Dorsolateral prefrontal cortex (tissue), 120 donors: ENCODE measurements at regions of chr19 and their contacts with region 1.

Region 1: DNA sequence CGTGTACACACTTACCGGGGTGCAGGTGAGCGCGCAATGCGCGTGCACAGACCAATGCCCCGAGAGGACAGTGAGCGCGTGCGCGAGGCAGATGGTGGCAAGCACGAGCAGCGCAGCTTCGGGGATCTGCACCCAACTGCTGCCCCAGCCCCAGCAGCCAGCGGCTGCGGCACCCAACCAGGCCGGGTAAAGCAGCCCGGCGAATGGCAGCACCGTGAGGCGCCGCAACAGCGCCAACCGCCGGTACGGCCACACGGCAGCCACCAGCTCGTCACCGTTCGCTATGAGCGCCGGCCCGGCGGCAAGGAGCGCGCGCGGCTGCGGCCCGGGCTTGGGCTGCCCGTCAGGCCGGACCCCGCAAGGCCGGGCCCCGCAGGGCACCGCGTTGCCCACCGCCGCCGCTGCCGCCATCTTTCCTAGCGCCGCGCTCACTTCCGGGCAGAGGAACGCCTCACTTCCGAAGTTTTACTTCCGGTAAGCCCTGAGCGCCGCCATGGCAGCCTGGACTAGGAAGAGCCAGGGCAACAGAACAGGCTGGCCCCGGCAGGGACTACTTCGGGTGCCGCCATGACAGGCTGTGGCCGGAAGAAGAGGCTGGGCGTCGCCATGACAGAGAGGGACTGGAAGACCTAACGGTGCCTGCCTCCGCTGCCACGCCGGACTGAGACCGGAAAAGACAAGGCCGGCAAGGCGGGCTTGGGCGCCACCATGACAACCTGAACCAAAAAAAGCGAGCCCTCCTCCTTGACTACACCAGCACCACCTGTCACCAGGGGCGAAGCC is at the start of gene ATP13A1:
- DNase-seq: peak; percentile 93 to 98 (median 97)
- H3K4me3 ChIP-seq: peak within 1 kb of the TSS; percentile 76 to 100 (median 97)
- H3K27ac ChIP-seq: peak within 1 kb of the TSS; percentile 81 to 100 (median 97)
- H3K27me3 ChIP-seq: no peaks in the 10 kb centered on the region
- CTCF ChIP-seq: peak in 38 of 56 donors; percentile 3 to 61 (median 32)
- total RNA-seq, gene ATP13A1: 45.7 to 107 (median 68.6) TPM

Region 2: DNA sequence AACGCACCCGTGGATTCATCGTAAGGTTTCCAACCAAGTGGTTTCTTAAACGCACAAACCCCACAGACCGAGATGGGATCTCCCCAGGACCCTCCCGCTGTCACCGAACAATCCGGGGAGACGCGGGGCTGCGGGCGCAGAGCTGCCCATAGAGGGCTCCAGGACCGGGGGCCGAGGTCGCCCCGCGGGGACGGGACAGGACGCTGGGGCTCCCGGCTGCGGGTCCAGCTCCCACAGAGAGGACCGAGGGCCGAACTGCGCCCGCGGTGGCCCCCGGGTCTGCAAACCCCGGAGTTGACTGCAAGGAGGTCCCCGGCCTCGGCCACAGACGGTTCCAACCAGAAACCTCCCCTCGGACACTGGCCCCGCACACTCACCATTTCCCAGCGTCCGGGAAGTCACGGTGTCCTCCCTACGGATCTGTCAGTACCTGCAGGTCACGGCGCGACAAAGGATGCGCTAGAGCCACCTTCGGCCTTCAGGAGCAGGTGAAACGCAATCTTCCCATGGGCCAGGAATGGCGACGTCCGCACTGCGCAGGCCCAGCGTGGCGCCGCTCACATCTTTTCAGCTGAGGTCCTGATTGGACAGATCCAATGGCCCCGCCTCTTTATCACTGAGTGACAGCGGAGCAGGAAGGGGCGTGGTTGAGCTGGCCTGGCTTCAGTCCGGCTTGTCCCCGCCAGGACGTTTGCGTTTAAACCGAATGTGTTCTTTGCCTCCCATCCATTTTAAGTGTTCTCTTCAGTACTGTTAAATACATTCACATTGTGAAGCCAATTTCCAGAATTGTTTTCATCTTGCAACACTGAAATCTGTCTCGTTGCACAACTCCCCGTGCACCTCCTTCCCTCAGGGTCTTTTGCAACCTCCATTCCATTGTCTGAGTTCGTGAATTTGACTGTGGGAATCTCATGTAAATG is 69.4 kb after region 1 on chr19 and contains the start of gene ZNF14:
- intact Hi-C with region 1: loop called (anchors 10 kb)
- DNase-seq: peak; percentile 86 to 96 (median 94)
- H3K4me3 ChIP-seq: peak within 1 kb of the TSS; percentile 31 to 100 (median 95)
- H3K27ac ChIP-seq: peak within 1 kb of the TSS in 53 of 59 donors; percentile 1 to 92 (median 76)
- H3K27me3 ChIP-seq: no peaks in the 10 kb centered on the region
- CTCF ChIP-seq: peak in 25 of 56 donors; percentile 1 to 46 (median 20)
- total RNA-seq, gene ZNF14: 6.8 to 18.5 (median 11.9) TPM